H1 (cell line): ENCODE measurements at regions of chr1 and their contacts with region 1.

Region 1: DNA sequence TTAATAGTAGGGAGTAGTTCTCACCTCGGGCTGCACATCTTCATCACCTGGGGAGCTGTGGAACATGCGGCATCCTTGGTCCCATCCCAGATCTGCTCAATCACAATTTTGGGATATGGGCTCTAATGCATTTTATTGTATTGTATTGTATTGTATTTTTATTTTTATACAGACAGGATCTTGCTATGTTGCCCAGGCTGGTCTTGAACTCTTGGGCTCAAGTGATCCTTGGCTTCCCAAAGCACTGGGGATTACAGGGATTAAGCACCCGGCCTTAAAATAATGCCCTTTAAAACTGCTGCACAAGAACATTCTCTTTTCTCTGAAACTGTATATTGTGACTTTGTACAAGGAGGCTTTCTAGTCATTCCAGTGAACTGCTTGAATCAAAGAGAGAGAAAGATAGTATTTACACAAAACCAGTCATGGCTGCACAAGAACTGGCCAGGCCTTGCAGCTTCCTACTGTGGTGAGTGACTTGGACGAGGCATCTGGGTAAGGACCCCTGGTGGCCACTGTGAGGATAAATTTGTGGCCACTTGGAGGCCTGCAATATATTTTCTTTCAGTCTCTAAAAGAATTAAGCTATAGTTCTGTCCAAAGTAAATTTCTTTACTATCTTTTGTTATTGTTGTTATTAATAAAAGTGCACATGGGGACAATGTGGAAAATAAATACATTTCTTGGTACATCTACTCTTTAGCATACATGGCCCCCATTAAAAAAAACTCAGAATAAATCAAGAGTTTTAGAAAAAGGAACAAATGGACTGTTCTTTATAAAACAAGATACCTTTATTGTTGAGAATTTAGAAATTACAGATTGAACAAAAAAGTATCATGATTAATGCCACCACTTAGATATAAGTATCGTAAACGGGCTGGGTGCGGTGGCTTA is 48.0 kb downstream of the TBCE start:
- DNase-seq: peak; percentile 17 to 62
- H3K4me3 ChIP-seq: no peak overlapping the region
- H3K27ac ChIP-seq: no peak overlapping the region
- H3K4me1 ChIP-seq: no peaks in the 10 kb centered on the region
- H3K27me3 ChIP-seq: no peaks in the 10 kb centered on the region
- CTCF ChIP-seq: peak; percentile 71 to 84 (median 75)
- EP300 ChIP-seq: no peak
- POLR2A ChIP-seq: no peak
- RAD21 ChIP-seq: peak; percentile 66 to 71

Region 2: DNA sequence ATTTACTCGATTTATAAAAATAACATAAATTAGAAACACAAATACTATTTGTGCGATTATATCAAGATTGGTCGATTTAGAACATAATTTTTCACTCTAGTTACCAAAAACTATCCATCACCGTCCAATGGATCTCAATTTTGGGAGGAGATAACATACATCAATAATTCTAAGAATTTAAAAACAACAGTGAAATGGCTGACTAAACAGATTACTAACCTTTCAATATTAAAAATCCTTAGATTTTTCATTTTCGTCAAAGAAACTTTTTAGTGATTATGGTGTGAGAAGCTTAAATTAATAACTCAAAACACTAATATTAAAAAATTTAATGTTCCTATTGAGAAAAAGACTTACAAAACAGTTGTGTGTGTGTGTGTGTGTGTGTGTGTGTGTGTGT is 179.1 kb before region 1 on chr1:
- CTCF ChIA-PET with region 1: interaction called, 18 read pairs
- POLR2A ChIA-PET with region 1: no interaction called
- DNase-seq: no peak
- H3K4me3 ChIP-seq: no peak overlapping the region
- H3K27ac ChIP-seq: no peak overlapping the region
- H3K4me1 ChIP-seq: no peaks in the 10 kb centered on the region
- H3K27me3 ChIP-seq: no peaks in the 10 kb centered on the region
- CTCF ChIP-seq: no peak
- EP300 ChIP-seq: no peak
- POLR2A ChIP-seq: no peak
- RAD21 ChIP-seq: no peak

Region 3: DNA sequence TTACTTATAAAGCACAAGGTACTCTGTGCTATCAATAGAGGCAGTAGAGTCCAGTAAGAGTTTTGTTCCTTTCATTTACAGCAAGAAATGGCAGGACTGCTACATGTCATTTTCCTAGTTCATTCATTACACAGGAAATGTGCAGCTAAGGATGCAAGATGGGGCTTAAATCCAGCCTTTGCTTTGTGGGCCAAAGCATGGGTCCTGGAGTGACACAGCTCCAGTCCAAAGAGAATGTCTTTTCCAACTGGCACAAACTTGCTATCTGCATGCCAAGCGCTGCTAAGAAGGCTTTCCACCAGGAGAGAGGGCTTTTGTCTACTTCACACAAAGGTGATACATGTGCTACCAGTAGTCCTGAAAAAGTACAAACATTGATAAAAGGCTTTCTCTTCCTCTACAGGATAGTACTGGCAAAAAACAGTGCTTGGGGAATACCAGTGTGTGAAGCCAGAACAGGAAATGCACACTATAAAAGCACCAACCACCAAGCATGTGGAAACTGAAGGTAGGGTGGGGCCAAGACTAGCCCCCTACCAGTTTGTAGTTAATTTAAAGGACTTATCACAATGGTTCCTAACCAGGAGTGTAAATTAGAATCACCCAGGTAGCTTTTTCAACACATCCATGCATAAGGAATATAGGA is 156.0 kb before region 1 on chr1:
- CTCF ChIA-PET with region 1: interaction called, 39 read pairs
- POLR2A ChIA-PET with region 1: no interaction called
- DNase-seq: no peak
- H3K4me3 ChIP-seq: no peak overlapping the region
- H3K27ac ChIP-seq: 0 out of 2 replicates have a peak overlapping the region, but pooled peaks have one; percentile 3
- H3K4me1 ChIP-seq: peaks cover 0 to 4% (median 0%) of the 10 kb centered on the region in 4 experiments; a peak in 1 of 7 replicates
- H3K27me3 ChIP-seq: no peaks in the 10 kb centered on the region
- CTCF ChIP-seq: no peak
- EP300 ChIP-seq: no peak
- POLR2A ChIP-seq: no peak
- RAD21 ChIP-seq: no peak

Region 4: GRCh38 chr1:235328357-235329138 is 86.7 kb before region 1 on chr1 and contains the start of gene GGPS1:
- CTCF ChIA-PET with region 1: interaction called, 34 read pairs
- POLR2A ChIA-PET with region 1: interaction called, 4 read pairs
- DNase-seq: peak; percentile 94 to 95
- H3K4me3 ChIP-seq: peak within 1 kb of the TSS; percentile 82 to 95 (median 92)
- H3K27ac ChIP-seq: peak within 1 kb of the TSS; percentile 90
- H3K4me1 ChIP-seq: peaks cover 0 to 8% (median 1%) of the 10 kb centered on the region in 4 experiments; a peak in 3 of 7 replicates
- H3K27me3 ChIP-seq: no peaks in the 10 kb centered on the region
- CTCF ChIP-seq: no peak
- EP300 ChIP-seq: no peak
- POLR2A ChIP-seq: peak; percentile 90 to 93
- RAD21 ChIP-seq: 0 out of 4 replicates have a peak, but pooled peaks of 1 of the 2 experiments have one; percentile 6
- total RNA-seq, gene GGPS1: 40.4 and 43.6 TPM in 2 replicates

Region 5: GRCh38 chr1:235397733-235398132 is 17.5 kb before region 1 on chr1:
- CTCF ChIA-PET with region 1: interaction called, 23 read pairs
- POLR2A ChIA-PET with region 1: no interaction called
- DNase-seq: no peak
- H3K4me3 ChIP-seq: no peak overlapping the region
- H3K27ac ChIP-seq: no peak overlapping the region
- H3K4me1 ChIP-seq: no peaks in the 10 kb centered on the region
- H3K27me3 ChIP-seq: no peaks in the 10 kb centered on the region
- CTCF ChIP-seq: no peak
- EP300 ChIP-seq: no peak
- POLR2A ChIP-seq: no peak
- RAD21 ChIP-seq: no peak